ENCODE measurements at regions of chr22 and their contacts with region 1.

Region 1: DNA sequence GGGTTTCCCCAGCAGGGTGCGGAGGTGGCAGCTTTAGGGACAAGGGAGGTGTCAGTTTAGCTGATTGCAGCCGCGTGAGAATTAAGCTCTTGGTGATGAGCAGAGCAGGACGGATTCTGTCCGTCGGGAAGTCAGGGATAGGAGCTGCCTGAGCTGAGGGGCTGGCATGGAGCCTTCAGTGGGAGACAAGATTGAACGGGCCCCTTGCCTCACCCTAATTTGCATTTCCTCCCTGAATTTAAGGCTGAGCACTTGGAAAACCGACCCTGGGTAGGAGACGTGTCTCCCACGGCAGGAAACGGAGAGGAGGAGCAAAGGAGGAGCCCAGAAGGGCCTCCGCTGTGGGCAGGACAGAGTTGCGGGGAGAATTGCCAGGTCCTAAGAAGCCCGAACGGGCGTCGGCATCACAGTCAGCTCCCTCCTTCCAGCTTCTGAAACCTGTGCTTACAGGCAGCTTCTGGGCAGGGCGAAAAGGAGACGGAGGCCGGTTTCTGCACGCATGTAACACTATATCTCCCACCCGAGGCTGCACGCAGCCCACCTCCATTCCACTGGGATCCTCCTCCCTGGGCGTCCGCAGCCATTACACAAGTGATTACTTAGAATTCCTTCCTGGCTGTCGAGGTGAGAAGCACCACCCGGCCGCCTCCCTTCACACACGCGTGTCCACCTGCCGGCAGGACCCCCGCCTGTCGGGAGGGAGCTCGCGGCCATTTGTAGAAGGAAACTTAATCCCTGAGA is 345.8 kb downstream of the BRD1 start:
- DNase-seq: no peak
- ATAC-seq: no peak

Region 2: GRCh38 chr22:49525801-49526535 is 44.1 kb after region 1 on chr22:
- intact Hi-C with region 1: no loop called
- DNase-seq: no peak
- ATAC-seq: peak; percentile 55

Region 3: DNA sequence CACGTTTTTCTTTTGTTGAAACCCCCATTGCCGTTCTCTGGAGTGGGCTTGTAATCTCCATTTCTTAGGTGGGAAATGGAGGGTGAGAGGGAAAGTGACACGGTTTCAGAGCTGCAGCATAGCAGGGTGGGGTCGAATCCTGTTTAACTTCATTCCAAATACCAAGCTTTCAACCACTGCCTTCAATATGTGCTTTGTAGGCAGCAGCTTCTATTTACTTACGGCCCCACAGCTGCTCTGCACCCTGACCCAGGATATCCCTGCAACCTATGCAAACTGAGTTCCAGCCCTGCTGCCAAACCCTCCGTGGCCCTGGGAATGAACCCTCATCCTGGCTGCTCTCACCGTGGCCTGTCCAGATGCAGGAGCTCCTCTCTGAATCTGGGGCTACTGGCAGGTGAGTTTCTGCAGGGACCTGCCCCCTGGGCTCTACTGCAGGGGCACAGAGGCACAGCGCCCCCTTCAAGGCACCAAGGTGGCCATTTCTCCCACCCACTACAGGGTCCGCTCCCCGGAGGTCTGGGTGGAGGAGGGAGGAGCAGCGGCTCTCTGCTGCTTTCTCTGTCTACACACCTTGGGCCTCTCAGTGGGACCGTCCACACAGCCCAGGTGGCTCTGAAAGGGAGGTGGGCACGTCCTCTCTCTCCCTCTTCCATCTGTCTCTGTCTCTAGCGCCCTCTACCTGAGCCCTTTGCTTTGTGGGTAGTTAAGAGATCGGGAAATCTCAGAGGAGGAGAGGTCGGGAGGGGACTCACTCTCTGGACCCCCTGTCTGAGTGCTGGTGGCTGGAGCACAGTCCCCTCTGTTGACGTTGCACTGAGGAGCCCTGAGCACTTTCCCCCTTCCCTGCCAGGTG is 66.8 kb after region 1 on chr22:
- intact Hi-C with region 1: loop called (anchors 10 kb)
- DNase-seq: no peak
- ATAC-seq: no peak